Activated T-helper 1 cell treated with anti-CD3 and anti-CD28 coated beads, Interleukin-12 subunit alpha, Interleukin-12 subunit beta, Interleukin-2, Interleukin-4 antibody, amounts not matched to agents 30 ng/mL and 10 ng/mL and 1 ng/mL, durations not matched to agents 14 hours and 24 hours and 36 hours (primary cell): ENCODE measurements at regions of chr11 and their contacts with region 1.

Region 1: DNA sequence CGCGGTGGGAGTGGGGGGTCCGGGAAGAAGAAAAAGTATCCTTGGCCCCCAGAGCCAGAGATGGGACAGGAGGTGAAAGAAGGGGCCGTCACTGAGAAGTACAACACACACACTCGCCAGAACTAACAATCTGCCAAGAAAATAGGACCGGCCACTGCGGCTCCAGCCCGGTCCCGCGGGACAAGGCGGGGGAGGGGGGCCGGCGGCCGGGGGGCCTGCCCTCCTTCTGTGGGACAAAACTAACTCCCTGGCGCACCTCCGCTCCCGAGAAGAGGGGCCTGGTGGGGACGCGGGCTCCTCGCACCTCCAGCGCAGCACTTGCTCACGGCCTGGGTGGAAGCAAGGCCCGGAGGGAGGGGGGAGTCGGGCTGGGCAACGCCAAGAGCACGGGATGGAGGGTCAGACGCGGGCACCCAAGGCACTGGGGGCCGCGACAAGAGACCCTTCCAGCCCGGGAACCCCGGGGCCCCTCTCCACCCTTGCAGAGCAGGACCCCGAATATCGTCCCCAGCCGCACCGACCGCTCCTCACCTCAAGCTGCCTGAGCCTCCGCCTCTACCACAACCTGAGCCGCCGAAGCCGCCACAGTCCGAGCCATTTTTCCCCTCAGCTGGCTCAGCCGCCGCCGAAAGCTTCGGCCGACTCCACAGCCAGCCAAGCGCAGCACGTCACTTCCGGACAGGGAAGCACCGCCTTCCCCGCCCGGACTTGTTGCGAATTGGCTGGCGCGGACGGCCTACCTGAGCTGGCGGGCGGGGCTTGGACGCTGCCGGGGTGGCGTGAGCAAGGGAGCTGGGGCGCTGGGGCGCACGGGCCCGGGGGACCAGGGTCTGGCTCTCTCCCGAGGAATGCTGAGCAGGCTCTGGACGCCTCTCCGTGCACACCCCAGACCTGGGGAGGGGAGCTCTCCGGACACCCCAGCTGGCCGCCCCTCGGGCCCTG is at the start of gene PIK3C2A:
- DNase-seq: peak; percentile 93
- H3K4me3 Mint-ChIP-seq: peak within 1 kb of the TSS; percentile 98
- H3K27ac Mint-ChIP-seq: peak within 1 kb of the TSS; percentile 94
- H3K4me1 Mint-ChIP-seq: peaks cover 35% of the 10 kb centered on the region
- H3K27me3 Mint-ChIP-seq: no peaks in the 10 kb centered on the region
- total RNA-seq, gene PIK3C2A: 31.7 and 31.8 TPM in 2 replicates

Region 2: GRCh38 chr11:16738193-16738946 is 469.2 kb before region 1 on chr11 and contains the start of gene C11orf58:
- intact Hi-C with region 1: loop called (anchors 2 kb)
- DNase-seq: peak; percentile 93
- H3K4me3 Mint-ChIP-seq: peak within 1 kb of the TSS; percentile 73
- H3K27ac Mint-ChIP-seq: peak within 1 kb of the TSS; percentile 88
- H3K4me1 Mint-ChIP-seq: peaks cover 32% of the 10 kb centered on the region
- H3K27me3 Mint-ChIP-seq: no peaks in the 10 kb centered on the region
- total RNA-seq, gene C11orf58: 150 and 152 TPM in 2 replicates

Region 3: DNA sequence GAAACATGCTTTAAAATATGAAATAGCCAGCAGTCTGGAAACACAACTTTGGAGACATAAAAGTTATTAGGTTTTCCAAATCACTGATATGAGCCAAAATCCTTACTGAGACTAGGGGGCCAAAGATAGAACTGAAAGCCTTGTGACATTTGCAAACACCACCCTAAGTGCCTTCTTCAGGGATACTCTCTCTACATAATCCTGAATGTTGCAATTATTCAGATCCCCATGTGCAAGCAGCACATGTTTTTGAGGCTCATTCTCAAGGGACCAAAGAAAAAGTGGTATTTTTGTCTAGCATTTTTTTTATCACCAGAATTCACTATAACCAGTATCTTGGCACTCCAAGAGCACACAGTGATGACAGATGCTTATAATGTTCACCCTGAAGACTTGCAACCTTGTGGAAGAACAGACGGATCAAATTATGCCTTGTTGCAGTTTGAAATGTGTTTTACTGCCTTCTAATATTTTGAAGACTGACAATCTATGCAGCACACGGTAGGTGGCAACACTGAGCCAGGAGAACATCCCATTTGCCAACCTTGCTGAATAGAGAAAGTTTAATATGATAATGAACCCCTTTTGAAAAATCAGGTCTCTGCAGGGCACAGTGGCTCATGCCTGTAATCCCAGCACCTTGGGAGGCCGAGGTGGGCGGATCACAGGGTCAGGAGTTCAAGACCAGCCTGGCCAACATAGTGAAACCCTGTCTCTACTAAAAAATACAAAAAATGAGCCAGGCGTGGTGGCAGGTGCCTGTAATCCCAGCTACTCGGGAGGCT is 271.9 kb before region 1 on chr11:
- intact Hi-C with region 1: loop called (anchors 10 kb)
- DNase-seq: no peak
- H3K4me3 Mint-ChIP-seq: no peak overlapping the region
- H3K27ac Mint-ChIP-seq: no peak overlapping the region
- H3K4me1 Mint-ChIP-seq: no peaks in the 10 kb centered on the region
- H3K27me3 Mint-ChIP-seq: peaks cover 4% of the 10 kb centered on the region

Region 4: DNA sequence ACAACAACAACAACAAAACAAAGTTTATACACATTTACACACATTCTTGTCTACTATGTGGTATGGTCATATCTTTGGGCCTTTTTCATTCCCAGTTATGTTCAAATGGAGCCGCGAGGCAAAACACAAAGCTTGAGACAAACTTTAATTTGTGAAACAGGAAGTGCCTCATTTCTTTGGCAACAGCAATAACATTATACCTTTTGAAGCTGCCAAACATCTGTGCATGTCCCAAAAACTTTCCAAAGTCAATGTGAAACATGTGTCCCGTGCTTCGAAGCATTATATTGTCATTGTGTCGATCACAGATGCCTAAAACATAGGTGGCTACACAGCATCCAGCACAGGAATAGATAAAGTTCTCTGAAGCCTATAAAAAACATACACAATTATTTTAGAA is 105.1 kb before region 1 on chr11:
- intact Hi-C with region 1: no loop called
- DNase-seq: no peak
- H3K4me3 Mint-ChIP-seq: no peak overlapping the region
- H3K27ac Mint-ChIP-seq: no peak overlapping the region
- H3K4me1 Mint-ChIP-seq: no peaks in the 10 kb centered on the region
- H3K27me3 Mint-ChIP-seq: no peaks in the 10 kb centered on the region

Region 5: DNA sequence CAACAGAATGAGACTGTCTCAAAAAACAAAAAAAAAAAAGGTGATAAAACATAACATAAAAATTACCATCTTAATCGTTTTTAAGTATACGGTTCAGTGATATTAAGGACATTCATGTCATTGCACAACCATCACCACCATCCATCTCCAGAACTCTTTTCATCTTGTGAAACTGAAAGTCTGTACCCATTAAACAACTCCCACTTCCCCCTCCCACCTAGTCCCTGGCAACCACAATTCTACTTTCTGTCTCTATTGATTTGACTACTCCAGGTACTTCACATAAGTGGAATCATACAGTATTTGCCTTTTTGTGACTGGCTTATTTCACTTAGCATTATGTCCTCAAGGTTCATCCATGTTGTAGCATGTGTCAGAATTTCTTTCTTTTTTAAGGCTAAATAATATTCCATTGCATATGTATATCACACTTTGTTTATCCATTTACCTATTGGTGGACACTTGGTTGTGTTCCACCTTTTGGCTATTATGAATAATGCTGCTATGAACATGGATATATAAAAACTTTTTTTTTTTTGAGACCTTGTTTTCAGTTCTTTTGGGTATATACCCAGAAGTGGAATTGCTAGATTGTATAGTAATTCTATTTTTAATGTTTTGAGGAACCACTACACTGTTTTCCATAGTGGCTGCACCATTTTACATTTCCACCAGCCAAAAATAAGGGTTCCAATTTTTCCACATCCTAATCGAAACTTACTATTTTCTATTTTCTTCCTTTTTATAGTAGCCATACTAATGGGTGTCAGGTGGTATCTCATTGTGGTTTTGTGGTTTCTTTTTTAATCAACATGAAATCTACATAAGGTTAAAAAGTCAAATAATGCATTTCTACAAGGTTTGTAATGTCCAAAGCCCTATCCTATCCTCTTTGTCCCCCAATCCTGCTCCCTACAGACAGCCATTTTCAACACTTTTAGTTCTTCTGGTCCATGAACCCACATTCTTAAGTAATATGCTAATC is 23.6 kb after region 1 on chr11:
- intact Hi-C with region 1: loop called (anchors 1 kb)
- DNase-seq: peak; percentile 44
- H3K4me3 Mint-ChIP-seq: no peak overlapping the region
- H3K27ac Mint-ChIP-seq: peak overlapping the region; percentile 77
- H3K4me1 Mint-ChIP-seq: peaks cover 20% of the 10 kb centered on the region
- H3K27me3 Mint-ChIP-seq: peaks cover 36% of the 10 kb centered on the region

Region 6: DNA sequence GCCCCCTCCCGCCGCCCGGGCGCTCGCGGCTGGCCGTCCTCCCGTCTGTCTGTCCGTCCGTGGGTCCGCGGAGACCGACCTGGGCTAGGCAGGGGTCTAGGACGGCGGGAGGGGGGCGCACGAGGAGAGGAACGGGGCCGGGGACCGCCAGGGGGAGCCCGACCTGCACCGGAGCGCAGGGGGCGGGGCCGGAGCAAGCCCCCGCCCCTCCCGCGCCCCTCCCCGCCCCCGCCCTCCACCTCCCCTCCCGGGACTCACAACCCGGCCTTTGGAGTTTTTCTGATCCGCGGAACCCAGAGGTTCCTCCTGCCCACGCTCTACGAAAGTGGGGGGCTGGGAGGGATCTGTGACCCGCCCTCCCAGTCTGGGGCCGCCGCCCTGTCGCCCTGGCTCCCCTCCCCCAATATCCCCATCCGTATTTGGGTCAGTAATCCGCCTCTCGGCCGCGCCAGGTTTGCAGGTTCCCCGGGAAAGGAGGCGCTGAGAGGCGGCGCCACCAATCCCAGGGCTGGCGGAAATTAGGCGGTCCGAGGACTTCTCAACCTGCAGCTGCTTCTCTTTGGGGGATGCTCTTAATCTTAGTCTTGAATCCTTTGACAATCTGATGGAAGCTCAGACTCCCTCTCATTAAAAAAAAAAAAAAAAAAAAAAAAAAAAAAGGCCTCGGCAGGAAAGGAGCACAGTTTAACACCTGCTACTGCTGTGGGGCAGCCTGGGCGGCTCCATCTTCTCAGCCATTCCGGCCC is 181.8 kb after region 1 on chr11:
- intact Hi-C with region 1: loop called (anchors 1 kb)
- DNase-seq: peak; percentile 65
- H3K4me3 Mint-ChIP-seq: peak overlapping the region; percentile 78
- H3K27ac Mint-ChIP-seq: peak overlapping the region; percentile 71
- H3K4me1 Mint-ChIP-seq: no peaks in the 10 kb centered on the region
- H3K27me3 Mint-ChIP-seq: peaks cover 26% of the 10 kb centered on the region

Region 7: GRCh38 chr11:18115360-18116127 is 908.0 kb after region 1 on chr11:
- intact Hi-C with region 1: no loop called
- DNase-seq: peak; percentile 43
- H3K4me3 Mint-ChIP-seq: no peak overlapping the region
- H3K27ac Mint-ChIP-seq: no peak overlapping the region
- H3K4me1 Mint-ChIP-seq: peaks cover 8% of the 10 kb centered on the region
- H3K27me3 Mint-ChIP-seq: peaks cover 30% of the 10 kb centered on the region